Right cardiac atrium (tissue), 5 donors: ENCODE measurements at regions of chr4 and their contacts with region 1.

Region 1: DNA sequence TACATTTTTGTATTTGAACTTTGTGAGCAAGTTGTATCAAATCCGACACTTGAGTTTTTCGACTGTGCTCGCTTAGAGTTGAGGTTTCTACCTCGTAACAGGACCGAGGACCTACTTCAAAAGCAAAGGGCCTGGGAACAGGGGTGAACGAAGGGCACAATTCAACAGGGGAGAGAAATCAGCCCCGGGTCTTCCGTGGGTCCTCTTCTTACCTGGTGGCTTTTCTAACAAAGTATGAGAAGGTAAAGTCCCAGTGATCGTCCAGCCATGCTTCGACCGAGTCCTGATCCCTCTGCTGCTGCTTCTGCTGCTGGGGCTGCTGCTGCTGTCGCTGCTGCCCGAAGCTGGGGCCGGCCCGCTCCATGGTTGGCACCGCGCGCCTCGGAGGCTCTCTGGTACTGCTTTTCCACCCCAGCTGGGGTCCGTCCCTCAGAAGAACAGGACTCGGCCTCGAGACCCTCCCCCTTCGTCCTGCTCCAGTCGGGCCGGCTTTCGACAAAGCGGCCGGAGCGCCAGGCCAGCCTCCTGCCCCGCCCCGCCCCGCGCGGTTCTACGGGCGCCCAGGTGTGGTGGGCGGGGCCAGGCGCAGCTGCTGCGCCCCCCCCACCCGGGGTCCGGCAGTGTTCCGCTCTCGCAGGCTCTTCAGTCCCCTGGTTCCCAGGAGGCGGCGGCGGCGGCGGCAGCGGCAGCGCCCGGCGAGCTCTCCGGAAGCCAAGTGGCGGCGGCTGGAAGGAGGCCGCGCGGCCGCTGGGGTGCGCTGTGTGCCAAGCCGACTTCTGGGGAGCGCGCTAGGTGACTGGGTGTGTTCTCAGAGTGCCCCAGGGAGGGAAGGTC is at the start of gene PDE5A:
- DNase-seq: peak; percentile 77 to 92 (median 91)
- ATAC-seq: peak; percentile 92 to 93
- H3K4me3 ChIP-seq: peak within 1 kb of the TSS; percentile 61
- H3K27ac ChIP-seq: peak within 1 kb of the TSS; percentile 27
- H3K4me1 ChIP-seq: no peaks in the 10 kb centered on the region
- H3K27me3 ChIP-seq: no peaks in the 10 kb centered on the region
- total RNA-seq, gene PDE5A: 7.1 to 11.8 (median 10.2) TPM

Region 2: DNA sequence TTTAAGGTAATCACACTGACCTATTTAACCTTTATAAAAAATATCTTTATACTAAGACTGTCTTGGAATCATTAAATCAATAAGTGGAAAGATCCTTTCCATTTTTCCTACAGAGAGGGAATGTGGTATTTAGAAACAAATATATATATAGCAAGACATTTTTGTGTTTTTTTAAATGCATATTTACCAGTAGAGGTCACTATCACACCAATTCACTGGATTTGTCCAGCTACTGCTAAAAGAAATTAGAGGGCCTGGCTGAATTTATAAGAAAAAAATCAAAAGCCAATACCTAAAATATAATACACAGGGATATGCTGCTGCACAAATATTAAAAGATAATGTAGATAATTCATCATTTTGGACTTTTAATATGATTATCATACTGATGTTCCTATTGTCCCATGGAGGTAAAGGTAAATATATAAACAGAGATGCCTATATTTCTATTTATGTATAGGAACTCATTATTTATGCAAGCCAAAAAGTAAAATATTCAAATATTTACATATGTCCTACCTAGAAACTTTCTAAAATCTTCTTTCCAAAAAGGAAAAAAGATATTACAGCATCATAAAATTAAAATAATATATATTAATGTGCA is 69.4 kb before region 1 on chr4:
- intact Hi-C with region 1: loop called in 1 of 4 experiments (anchors 10 kb)
- DNase-seq: no peak
- ATAC-seq: no peak
- H3K4me3 ChIP-seq: no peak overlapping the region
- H3K27ac ChIP-seq: no peak overlapping the region
- H3K4me1 ChIP-seq: no peaks in the 10 kb centered on the region
- H3K27me3 ChIP-seq: no peaks in the 10 kb centered on the region

Region 3: DNA sequence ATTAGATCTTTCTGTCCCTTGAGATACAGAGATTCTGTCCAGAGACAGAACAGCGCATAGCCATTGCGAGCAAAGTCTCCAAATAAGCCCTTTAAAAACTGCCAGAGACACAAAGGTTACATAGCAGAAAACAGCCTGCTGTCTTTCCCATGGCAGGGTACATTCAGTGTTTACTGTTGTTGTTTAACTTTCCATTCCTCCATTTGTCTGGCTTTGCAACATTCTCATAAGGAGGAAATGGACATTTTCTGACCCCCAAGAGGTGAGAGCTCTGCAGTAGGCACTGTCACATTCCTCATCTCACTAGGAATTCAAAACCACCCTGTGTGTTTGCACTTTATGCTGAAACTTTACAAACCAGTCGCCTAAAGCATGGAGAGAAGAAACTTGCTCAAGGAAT is 48.2 kb before region 1 on chr4:
- intact Hi-C with region 1: no loop called
- DNase-seq: no peak
- ATAC-seq: no peak
- H3K4me3 ChIP-seq: no peak overlapping the region
- H3K27ac ChIP-seq: no peak overlapping the region
- H3K4me1 ChIP-seq: no peaks in the 10 kb centered on the region
- H3K27me3 ChIP-seq: no peaks in the 10 kb centered on the region

Region 4: GRCh38 chr4:119755599-119755998 is 127.1 kb after region 1 on chr4:
- intact Hi-C with region 1: no loop called
- DNase-seq: no peak
- ATAC-seq: no peak
- H3K4me3 ChIP-seq: no peak overlapping the region
- H3K27ac ChIP-seq: no peak overlapping the region
- H3K4me1 ChIP-seq: no peaks in the 10 kb centered on the region
- H3K27me3 ChIP-seq: no peaks in the 10 kb centered on the region

Region 5: DNA sequence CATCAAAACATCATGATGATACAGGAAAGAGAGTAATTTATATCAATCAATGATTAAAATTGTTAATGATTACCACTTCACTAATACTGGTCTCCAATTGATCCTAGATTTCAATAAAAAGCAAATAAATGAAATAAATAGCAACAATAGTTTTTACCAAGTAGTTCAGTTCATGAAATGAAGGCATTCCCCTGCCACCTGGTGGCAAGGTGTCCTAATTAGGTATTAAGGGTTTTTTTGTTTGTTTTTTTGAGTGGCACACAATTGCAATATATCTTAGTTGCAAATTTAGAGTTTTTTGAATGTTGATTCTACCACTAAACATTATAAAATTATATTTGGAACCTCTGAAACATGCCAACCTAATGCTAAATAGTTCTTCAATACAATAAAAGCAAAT is 157.4 kb after region 1 on chr4:
- intact Hi-C with region 1: loop called in 1 of 4 experiments (anchors 1 kb)
- DNase-seq: peak in 2 of 3 donors; percentile 11 to 61
- ATAC-seq: no peak
- H3K4me3 ChIP-seq: no peak overlapping the region
- H3K27ac ChIP-seq: no peak overlapping the region
- H3K4me1 ChIP-seq: no peaks in the 10 kb centered on the region
- H3K27me3 ChIP-seq: no peaks in the 10 kb centered on the region